ENCODE measurements at regions of chr1 and their contacts with region 1.

Region 1: GRCh38 chr1:31938174-31938950 is at the start of gene PTP4A2:
- DNase-seq: peak; percentile 56 to 90 (median 82)
- ATAC-seq: peak; percentile 57 to 70
- H3K4me3 Mint-ChIP-seq: peak within 1 kb of the TSS; percentile 90 to 100 (median 96)
- H3K27ac Mint-ChIP-seq: peak within 1 kb of the TSS; percentile 94 to 99 (median 97)
- H3K4me1 Mint-ChIP-seq: peaks cover 31 to 84% (median 73%) of the 10 kb centered on the region in 4 donors
- H3K27me3 Mint-ChIP-seq: no peaks in the 10 kb centered on the region
- polyA plus RNA-seq, gene PTP4A2: 287 to 748 (median 546) TPM

Region 2: GRCh38 chr1:31891280-31891679 is 47.1 kb before region 1 on chr1:
- POLR2A ChIA-PET with region 1: interaction called, 10 read pairs
- DNase-seq: no peak
- ATAC-seq: no peak
- H3K4me3 Mint-ChIP-seq: no peak overlapping the region
- H3K27ac Mint-ChIP-seq: peak overlapping the region in 4 of 10 donors; percentile 15 to 99 (median 72)
- H3K4me1 Mint-ChIP-seq: peaks cover 9 to 28% (median 23%) of the 10 kb centered on the region in 4 donors
- H3K27me3 Mint-ChIP-seq: no peaks in the 10 kb centered on the region

Region 3: GRCh38 chr1:31923901-31924535 is 14.3 kb before region 1 on chr1:
- POLR2A ChIA-PET with region 1: interaction called, 35 read pairs
- DNase-seq: no peak
- ATAC-seq: peak in 1 of 2 donors; percentile 46
- H3K4me3 Mint-ChIP-seq: peak overlapping the region; percentile 44 to 88 (median 72)
- H3K27ac Mint-ChIP-seq: peak overlapping the region; percentile 18 to 91 (median 86)
- H3K4me1 Mint-ChIP-seq: peaks cover 28 to 86% (median 81%) of the 10 kb centered on the region in 4 donors
- H3K27me3 Mint-ChIP-seq: no peaks in the 10 kb centered on the region

Region 4: DNA sequence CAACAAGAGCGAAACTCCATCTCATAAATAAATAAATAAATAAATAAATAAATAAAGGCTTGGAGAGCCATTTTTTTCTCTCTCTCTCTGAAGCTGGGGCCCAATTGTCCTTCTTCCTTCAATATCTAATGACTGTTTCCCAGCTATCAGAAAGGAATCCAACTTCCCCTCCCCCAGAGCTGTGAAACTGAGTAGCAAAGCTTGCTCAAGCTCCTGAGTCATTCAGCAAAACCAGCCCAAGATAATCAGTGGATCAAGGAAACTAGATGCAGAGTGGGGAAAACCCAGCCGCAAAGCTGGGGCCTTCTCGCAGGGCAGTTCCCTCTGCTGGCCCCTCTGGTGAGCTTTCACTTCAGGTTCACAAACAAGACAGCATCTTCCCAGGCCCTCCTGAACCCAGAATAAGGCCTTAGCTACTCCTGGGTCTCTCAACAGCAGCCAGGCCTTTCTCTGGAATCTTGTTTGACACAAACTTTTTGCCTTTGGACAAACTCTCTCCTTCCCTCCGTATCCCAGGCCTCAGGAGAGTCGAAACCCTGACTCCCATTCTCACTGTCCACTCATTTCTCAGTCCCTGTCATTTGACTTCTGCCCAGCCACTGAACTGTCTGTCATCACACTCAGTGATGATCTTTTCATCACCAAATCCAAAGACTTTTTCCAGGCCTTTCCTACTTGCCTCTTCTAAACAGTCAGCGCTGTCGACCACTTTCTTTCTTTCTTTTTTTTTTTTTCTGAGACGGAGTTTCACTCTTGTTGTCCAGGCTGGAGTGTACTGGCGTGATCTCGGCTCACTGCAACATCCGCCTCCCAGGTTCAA is 17.8 kb after region 1 on chr1:
- POLR2A ChIA-PET with region 1: interaction called, 143 read pairs
- DNase-seq: peak in 9 of 10 donors; percentile 38 to 77 (median 53)
- ATAC-seq: peak; percentile 91 to 92
- H3K4me3 Mint-ChIP-seq: peak overlapping the region in 9 of 10 donors; percentile 5 to 77 (median 48)
- H3K27ac Mint-ChIP-seq: peak overlapping the region; percentile 62 to 93 (median 88)
- H3K4me1 Mint-ChIP-seq: peaks cover 31 to 79% (median 57%) of the 10 kb centered on the region in 4 donors
- H3K27me3 Mint-ChIP-seq: no peaks in the 10 kb centered on the region

Region 5: DNA sequence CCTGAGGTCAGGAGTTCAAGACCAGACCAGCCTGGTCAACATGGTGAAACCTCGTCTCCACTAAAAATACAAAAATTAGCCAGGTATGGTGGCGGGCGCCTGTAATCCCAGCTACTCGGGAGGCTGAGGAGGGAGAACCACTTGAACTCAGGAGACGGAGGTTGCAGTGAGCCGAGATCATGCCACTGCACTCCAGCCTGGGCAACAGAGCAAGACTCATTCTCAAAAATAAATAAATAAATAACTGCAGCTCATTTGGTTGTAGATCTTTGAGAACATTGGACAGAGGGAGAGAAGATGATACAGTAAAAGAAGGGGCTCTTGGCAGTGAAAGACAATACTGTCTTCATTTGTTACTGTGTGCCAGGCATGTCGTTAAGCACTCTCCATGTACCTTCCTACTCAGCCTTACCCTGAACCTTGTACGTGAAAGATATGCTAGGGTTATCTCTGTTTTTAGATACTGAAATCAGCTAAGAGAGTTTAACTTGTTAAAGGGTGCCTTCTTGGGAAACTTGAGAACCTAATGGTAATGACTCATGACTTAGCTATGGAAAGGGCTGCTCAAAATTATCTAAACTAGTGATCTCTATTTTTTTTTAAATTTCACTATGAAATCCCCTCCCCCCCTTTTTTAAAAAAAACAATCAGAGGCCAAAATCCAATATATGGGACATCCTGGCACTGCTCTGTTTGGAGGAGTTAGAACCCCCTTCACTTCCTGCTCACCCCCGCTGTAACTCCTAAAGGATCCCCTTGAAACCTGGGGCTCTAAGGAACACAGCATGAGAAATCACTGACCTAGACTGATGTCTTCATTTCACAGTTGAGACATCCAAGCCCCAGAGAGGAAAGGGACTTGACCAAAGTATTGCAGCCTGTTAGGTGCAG is 162.7 kb after region 1 on chr1:
- POLR2A ChIA-PET with region 1: no interaction called
- DNase-seq: no peak
- ATAC-seq: no peak
- H3K4me3 Mint-ChIP-seq: no peak overlapping the region
- H3K27ac Mint-ChIP-seq: peak overlapping the region in 1 of 10 donors; percentile 35
- H3K4me1 Mint-ChIP-seq: peaks cover 0 to 3% (median 0%) of the 10 kb centered on the region in 4 donors
- H3K27me3 Mint-ChIP-seq: no peaks in the 10 kb centered on the region